Panc1 (cell line): ENCODE measurements at regions of chr1 and their contacts with region 1.

Region 1: GRCh38 chr1:117541585-117541984 is 64.3 kb upstream of the TENT5C start:
- DNase-seq: no peak
- ATAC-seq: no peak
- H3K4me3 ChIP-seq: no peak overlapping the region
- H3K27ac ChIP-seq: no peak overlapping the region
- H3K4me1 ChIP-seq: no peaks in the 10 kb centered on the region
- H3K27me3 ChIP-seq: no peaks in the 10 kb centered on the region
- CTCF ChIP-seq: no peak

Region 2: DNA sequence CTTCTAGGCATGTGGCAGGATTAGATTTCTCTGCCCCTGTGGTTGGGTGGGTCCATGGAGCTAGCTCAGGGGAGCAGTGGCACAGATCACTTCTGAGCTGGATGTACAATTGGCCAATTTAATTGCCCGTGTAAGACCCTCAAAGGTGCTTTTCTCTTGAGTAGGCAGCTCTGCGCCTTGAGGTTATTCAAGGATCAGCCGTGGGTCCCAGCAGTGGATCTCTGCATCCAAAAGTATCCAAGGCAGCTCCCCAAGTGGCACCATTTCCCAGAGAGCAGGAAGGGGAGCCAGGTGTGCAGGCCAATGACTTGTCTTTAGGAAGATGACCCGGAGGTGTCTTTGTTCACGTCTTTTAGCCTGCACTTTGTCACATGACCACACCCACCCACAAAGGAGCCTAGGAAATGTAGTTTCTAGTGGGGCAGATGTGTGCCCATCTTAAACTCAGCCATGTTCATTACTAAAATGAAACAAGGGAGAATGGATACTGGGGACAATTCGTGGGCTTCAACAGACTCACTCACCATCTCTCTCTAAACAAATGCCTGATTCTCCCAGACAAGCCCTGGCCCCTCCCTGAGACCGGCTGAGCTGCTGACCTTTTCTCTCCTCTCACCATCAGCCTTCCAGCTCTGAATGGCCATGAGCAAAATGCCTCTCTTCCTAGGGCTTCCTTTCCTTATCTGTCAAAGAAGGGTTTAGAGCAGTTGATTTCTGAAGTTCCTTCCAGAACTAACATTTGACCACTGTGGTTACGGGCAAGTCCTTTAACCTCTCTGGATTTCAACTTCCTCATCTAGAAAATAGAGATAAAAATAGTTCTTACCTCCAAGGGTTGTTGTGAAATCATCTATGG is 22.9 kb after region 1 on chr1:
- CTCF ChIA-PET with region 1: no interaction called
- POLR2A ChIA-PET with region 1: interaction called, 11 read pairs
- in situ Hi-C with region 1: no loop called
- intact Hi-C with region 1: no loop called
- DNase-seq: no peak
- ATAC-seq: no peak
- H3K4me3 ChIP-seq: no peak overlapping the region
- H3K27ac ChIP-seq: no peak overlapping the region
- H3K4me1 ChIP-seq: no peaks in the 10 kb centered on the region
- H3K27me3 ChIP-seq: no peaks in the 10 kb centered on the region
- CTCF ChIP-seq: no peak